CD8-positive, alpha-beta T cell (primary cell): ENCODE measurements at regions of chrX and their contacts with region 1.

Region 1: DNA sequence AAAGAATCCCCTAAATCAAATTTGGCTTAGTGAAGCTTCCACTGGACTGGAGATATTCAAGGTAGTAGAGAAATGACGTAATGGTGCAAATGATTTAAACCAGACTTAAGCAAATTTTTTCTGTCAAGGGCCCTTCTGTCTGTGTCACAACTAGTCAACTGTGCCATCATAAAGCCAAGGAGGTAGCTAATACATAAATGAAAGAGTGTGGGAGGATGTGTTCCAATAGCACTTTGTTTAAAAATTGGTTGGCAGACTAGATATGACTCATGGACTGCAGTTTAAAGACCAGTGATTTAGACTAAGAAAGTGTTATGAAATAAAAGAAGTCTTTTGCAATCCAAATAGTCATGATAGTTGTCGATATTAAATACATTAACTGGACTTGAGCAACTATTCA is 24.3 kb upstream of the TEX13C start:
- DNase-seq: no peak
- ATAC-seq: no peak
- H3K4me3 ChIP-seq: no peak overlapping the region
- H3K4me3 Mint-ChIP-seq: no peak overlapping the region
- H3K27ac ChIP-seq: no peak overlapping the region
- H3K27ac Mint-ChIP-seq: peak overlapping the region; percentile 9
- H3K4me1 ChIP-seq: no peaks in the 10 kb centered on the region
- H3K4me1 Mint-ChIP-seq: peaks cover 18% of the 10 kb centered on the region
- H3K27me3 ChIP-seq: no peaks in the 10 kb centered on the region
- H3K27me3 Mint-ChIP-seq: no peaks in the 10 kb centered on the region
- CTCF ChIP-seq: no peak

Region 2: DNA sequence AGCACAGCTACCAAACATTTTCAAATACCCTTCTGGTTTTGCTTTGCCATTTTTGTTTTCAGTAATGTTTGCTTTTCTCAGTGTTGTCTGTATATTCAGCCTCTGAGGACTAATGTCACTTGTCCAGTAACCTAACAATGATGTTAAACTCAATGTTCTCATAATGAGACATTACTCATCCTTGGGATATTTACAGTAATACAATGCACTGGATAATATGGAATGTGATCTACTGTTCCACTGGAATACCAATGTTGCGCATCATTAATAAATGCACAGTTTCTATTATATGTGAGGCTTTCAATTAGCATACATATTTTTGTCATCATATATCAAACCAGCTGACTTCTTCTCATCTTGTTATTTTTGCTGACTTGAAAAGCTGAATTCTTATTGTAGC is 689.8 kb before region 1 on chrX:
- CTCF ChIA-PET with region 1: no interaction called
- POLR2A ChIA-PET with region 1: no interaction called
- intact Hi-C with region 1: loop called in 1 of 2 experiments (anchors 5 kb)
- DNase-seq: no peak
- ATAC-seq: no peak
- H3K4me3 ChIP-seq: no peak overlapping the region
- H3K4me3 Mint-ChIP-seq: no peak overlapping the region
- H3K27ac ChIP-seq: no peak overlapping the region
- H3K27ac Mint-ChIP-seq: no peak overlapping the region
- H3K4me1 ChIP-seq: no peaks in the 10 kb centered on the region
- H3K4me1 Mint-ChIP-seq: peaks cover 2% of the 10 kb centered on the region
- H3K27me3 ChIP-seq: no peaks in the 10 kb centered on the region
- H3K27me3 Mint-ChIP-seq: no peaks in the 10 kb centered on the region
- CTCF ChIP-seq: no peak

Region 3: GRCh38 chrX:125810856-125811255 is 515.5 kb after region 1 on chrX:
- CTCF ChIA-PET with region 1: no interaction called
- POLR2A ChIA-PET with region 1: no interaction called
- intact Hi-C with region 1: no loop called
- DNase-seq: no peak
- ATAC-seq: no peak
- H3K4me3 ChIP-seq: no peak overlapping the region
- H3K4me3 Mint-ChIP-seq: no peak overlapping the region
- H3K27ac ChIP-seq: no peak overlapping the region
- H3K27ac Mint-ChIP-seq: no peak overlapping the region
- H3K4me1 ChIP-seq: no peaks in the 10 kb centered on the region
- H3K4me1 Mint-ChIP-seq: no peaks in the 10 kb centered on the region
- H3K27me3 ChIP-seq: no peaks in the 10 kb centered on the region
- H3K27me3 Mint-ChIP-seq: no peaks in the 10 kb centered on the region
- CTCF ChIP-seq: no peak